Aorta (tissue), 5 donors: ENCODE measurements at regions of chr17 and their contacts with region 1.

Region 1: DNA sequence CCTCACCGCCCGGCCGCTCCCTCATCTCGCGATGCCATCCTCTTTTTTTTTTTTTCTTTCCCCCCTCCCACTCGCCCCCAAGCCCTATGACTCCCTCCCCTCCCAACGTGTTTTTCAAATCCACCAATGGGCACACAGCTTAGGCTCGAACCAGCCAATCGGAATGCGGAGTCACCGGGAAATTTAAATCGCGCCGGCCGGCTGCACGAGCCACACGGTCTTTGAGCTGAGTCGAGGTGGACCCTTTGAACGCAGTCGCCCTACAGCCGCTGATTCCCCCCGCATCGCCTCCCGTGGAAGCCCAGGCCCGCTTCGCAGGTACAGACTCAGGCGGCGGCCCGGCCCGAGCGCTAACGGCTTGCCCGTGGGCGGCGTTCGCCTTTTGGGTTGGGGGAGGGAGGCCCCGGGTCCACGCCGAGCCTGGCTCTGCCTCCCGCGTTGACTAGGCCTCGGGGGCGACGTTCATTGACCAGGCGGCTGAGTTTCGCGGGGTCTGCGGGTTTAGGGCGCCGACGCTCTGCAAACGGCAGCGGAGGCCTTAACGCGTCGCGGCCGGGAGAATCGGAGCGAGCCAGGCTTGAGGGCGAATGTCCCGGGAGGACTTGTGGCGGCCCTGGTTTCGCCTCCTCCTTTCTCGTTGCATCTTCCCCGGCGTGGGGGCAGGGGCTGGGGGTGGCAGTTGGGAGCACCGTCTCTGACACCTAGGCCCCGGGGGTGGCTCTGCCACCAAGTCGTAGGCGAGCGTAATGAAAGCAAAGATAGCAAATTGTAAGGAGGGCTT is at the start of gene KPNA2:
- DNase-seq: peak; percentile 96 to 97
- ATAC-seq: peak; percentile 97
- H3K4me3 ChIP-seq: peak within 1 kb of the TSS; percentile 74 to 77
- H3K27ac ChIP-seq: peak within 1 kb of the TSS in 1 of 2 donors; percentile 13
- H3K4me1 ChIP-seq: peaks cover 0 to 3% of the 10 kb centered on the region in 2 donors
- H3K27me3 ChIP-seq: no peaks in the 10 kb centered on the region
- total RNA-seq, gene KPNA2: 19.6 to 20.9 TPM

Region 2: GRCh38 chr17:67993596-67994361 is 41.9 kb before region 1 on chr17:
- intact Hi-C with region 1: loop called in 1 of 2 experiments (anchors 1 kb)
- DNase-seq: peak in 1 of 2 donors; percentile 94
- ATAC-seq: peak; percentile 89
- H3K4me3 ChIP-seq: peak overlapping the region; percentile 64 to 65
- H3K27ac ChIP-seq: peak overlapping the region; percentile 3 to 97
- H3K4me1 ChIP-seq: no peaks in the 10 kb centered on the region
- H3K27me3 ChIP-seq: no peaks in the 10 kb centered on the region

Region 3: DNA sequence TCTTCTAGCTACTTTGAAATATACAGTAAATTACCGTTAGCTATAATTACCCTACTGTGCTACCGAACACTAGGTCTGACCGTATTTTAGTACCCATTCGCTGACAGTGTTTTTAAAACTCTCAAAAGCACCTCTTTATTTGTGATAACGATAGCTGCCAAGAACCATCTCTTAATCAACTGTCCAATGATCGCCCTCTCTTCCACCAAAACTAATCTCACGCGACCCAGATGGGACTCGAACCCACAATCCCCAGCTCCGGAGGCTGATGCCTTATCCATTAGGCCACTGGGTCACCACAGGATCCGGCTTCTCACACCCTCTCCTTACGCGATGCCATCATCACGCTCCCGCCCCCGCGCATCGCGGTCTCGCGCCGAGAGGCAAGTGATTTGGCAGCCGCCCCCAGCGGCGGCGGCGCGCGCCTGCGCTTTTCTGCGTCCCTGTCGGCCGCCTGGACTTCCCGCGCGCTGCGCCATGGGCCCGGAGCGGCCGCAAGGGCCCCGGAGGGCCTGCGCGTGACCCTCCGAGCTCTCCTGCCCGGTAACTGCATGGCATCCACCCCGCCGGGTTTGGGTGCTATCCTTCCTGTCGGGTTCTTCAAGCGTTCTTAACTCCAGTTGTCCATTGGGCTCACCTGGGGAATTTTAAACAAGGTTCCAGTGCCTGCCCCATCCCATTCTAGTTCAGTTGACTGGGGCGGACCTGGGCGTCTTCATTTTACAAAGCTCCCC is 15.9 kb before region 1 on chr17:
- intact Hi-C with region 1: loop called in 1 of 2 experiments (anchors 2 kb)
- DNase-seq: peak; percentile 96 to 99
- ATAC-seq: peak; percentile 98
- H3K4me3 ChIP-seq: peak overlapping the region; percentile 59 to 68
- H3K27ac ChIP-seq: peak overlapping the region in 1 of 2 donors; percentile 30
- H3K4me1 ChIP-seq: no peaks in the 10 kb centered on the region
- H3K27me3 ChIP-seq: no peaks in the 10 kb centered on the region

Region 4: DNA sequence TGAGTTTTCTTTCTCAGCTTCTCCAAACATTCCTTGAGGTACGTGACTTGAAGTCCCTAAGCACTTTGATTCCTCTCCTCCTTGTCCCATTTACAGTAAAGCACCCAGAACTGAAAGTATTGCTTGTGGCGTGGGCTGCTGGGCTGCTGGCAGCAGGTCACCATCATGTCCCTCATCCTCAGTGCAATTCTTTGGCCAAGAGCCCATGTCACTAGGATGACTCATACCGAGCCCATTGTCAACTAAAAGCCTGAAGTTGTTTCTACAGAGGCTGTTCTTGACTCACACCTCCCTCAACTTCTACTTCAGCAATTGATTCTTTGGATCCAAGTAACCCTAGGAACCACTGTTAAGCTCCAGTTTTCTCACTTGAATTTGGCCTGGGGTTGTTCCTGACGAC is 54.2 kb after region 1 on chr17:
- intact Hi-C with region 1: loop called in 1 of 2 experiments (anchors 10 kb)
- DNase-seq: peak in 1 of 2 donors; percentile 64
- ATAC-seq: no peak
- H3K4me3 ChIP-seq: no peak overlapping the region
- H3K27ac ChIP-seq: no peak overlapping the region
- H3K4me1 ChIP-seq: no peaks in the 10 kb centered on the region
- H3K27me3 ChIP-seq: no peaks in the 10 kb centered on the region